ENCODE measurements at regions of chr6 and their contacts with region 1.

Region 1: DNA sequence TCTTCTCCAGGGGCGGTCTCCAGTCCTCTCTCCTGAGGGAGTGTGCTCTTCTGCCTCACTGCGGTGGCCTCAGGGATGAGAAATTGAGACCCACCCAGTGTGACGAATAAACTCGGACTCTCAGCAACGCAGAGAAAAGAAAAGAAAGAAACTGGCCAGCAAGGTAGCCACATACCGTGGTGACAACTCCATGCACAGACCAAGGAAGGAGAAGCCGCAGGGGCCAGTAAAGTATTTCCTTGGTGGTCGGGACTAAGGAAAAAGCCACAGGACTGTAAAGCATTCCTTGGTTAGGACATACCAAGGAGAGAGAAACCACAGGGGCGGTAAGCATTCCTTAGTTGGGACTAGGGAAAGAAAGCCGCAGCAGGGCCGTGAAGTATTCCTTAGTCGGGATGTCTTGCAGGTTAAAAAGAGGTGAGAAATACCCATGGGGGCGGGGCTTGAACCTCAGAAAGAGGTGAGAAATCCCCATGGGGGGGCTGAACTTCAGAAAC is 13.6 kb upstream of the GOPC start:
- DNase-seq: no peak
- ATAC-seq: no peak
- H3K4me3 Mint-ChIP-seq: no peak overlapping the region
- H3K27ac Mint-ChIP-seq: peak overlapping the region; percentile 66
- H3K4me1 Mint-ChIP-seq: peaks cover 11% of the 10 kb centered on the region
- H3K27me3 Mint-ChIP-seq: peaks cover 9% of the 10 kb centered on the region
- CTCF ChIP-seq: no peak

Region 2: GRCh38 chr6:117906853-117907599 is 291.1 kb after region 1 on chr6 and contains the start of gene SLC35F1:
- CTCF ChIA-PET with region 1: no interaction called
- POLR2A ChIA-PET with region 1: no interaction called
- intact Hi-C with region 1: loop called (anchors 10 kb)
- DNase-seq: peak; percentile 17
- ATAC-seq: peak; percentile 45
- H3K4me3 Mint-ChIP-seq: peak within 1 kb of the TSS; percentile 66
- H3K27ac Mint-ChIP-seq: no peak within 1 kb of the TSS
- H3K4me1 Mint-ChIP-seq: peaks cover 10% of the 10 kb centered on the region
- H3K27me3 Mint-ChIP-seq: peaks cover 48% of the 10 kb centered on the region
- CTCF ChIP-seq: no peak
- total RNA-seq, gene SLC35F1: not detected in 2 replicates

Measured in activated B cell treated with CpG ODN at 0.5 μM for 24 hours (primary cell).